ENCODE measurements at regions of chr1 and their contacts with region 1.

Region 1: DNA sequence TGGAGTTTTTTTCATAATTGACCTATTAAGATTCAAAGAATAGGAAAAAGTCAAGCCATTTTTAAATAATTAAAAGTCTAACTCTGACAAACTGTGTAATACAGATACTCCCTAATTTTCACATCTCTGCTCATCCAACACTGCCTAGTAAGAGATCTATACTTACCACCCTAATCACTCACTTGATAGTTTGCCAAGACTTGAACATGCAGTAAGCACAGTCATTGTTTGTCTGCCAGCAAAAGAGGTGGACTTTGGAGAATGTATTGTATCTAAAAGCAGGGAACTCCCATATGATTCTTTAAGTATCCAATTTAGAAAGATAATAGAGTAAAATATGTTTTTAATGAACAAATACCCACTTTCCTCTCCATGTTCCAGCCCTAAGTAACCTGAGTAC is 15.5 kb downstream of the TMEM59 start:
- DNase-seq: no peak
- CTCF ChIP-seq: no peak

Region 2: GRCh38 chr1:53826367-53826766 is 211.1 kb before region 1 on chr1:
- CTCF ChIA-PET with region 1: no interaction called
- POLR2A ChIA-PET with region 1: no interaction called
- DNase-seq: no peak
- CTCF ChIP-seq: no peak

Region 3: DNA sequence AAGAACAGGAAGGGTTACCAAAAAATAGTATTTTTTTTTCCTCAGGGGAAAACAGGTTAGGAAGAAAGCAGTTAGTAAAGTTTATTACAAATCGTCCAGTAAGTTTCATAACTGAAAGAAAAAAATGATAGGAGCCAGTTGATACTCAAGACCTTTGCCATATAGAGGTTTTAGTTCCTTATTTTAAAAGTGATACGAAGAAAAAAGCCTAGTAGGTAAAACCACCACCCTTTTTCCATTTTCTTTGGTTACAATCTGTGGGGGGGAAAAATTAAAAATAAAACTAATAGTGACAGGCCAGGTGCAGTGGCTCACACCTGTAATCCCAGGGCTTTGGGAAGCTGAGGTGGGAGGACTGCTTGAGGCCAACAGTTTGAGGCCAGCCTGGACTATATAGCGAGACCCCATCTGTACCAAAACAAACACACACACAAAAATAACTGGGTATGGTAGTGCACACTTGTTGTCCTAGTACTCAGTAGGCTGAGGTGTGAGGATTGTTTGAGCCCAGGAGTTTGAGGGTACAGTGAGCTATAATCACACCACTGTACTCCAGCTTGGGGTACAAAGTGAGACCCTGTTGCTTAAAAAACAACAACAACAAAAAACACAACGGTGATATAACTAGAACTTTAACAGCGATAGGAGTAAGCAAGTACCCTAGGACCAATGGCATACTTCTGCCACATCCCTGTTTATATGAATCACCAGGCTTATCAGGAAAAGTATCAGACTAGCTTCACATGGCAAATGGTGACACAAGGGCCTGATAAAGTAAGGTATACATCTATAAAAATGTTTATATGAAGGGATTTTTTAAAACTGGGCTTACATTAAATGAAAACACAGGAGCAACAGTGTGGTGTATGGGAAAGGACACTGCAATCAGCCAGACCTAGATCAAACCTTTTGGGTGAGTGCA is 10.2 kb after region 1 on chr1:
- CTCF ChIA-PET with region 1: interaction called, 16 read pairs
- POLR2A ChIA-PET with region 1: interaction called, 4 read pairs
- DNase-seq: peak; percentile 18
- CTCF ChIP-seq: no peak

Region 4: DNA sequence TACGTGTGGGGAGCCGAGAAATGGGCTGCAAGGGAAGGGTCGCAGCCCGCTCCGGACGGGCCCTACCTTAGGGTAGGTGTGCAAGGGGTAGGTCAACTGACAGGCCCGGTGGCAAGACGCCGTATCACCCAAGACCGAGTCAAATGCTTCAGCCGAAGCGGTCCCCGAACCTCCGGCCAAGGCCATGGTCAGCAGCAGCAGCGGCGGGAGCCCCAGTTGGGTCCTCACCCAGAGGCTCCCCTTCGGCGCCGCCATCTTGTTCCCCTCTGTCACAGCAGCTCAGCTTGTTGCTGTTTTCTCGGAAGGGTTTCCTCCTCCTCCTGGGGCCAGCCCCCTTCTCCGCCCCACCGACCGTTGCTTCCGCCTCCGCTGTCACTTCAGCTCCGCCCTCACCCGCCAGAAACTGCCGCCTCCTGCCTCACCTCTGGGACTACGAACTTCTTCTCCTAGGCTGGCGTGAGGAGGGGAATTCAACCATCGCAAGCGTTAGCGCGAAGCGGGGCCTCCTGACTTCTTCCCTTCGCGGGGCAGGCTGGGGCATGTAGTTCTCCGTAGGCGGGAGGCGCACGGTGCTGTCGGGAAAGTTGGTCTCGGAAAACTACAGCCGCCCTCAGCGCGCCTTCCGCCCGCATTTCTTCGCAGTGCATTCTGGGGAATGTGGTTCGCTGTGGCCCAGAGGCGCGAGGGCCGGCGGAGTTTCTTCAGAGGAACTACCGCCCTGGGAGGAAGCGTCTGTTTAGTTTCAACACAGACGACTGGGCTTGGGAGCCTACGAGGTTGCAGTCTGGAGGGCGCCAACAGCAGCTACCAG is 15.7 kb after region 1 on chr1 and contains the starts of genes TCEANC2 and TMEM59:
- CTCF ChIA-PET with region 1: interaction called, 16 read pairs
- POLR2A ChIA-PET with region 1: interaction called, 7 read pairs
- DNase-seq: peak; percentile 93
- CTCF ChIP-seq: no peak

Region 5: DNA sequence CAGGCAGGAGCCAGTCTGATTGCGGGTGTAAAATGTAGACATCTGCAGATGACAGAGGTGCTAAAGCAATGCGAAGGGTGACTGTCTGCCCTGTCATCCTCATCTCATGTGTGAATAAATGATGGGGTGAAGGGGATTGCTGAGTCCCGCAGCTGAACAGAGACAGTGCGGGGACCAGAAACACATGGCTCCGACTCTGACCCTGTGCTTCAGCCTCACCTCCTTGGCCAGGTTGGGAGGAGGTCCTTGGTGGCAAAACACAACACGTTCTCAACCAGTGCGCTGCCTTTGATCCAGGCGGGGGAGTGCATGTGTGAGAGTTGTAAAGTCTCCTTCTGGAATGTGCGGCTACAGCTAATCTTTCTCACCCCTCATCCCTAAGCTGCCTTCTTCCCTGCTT is 795.6 kb after region 1 on chr1:
- CTCF ChIA-PET with region 1: no interaction called
- POLR2A ChIA-PET with region 1: no interaction called
- DNase-seq: no peak
- CTCF ChIP-seq: no peak